OCI-LY7 (cell line): ENCODE measurements at regions of chr6 and their contacts with region 1.

Region 1: GRCh38 chr6:26025894-26026832 is 61.1 kb upstream of the HFE start:
- DNase-seq: peak; percentile 95
- H3K4me3 ChIP-seq: peak overlapping the region; percentile 71
- H3K27ac ChIP-seq: peak overlapping the region; percentile 99
- H3K4me1 ChIP-seq: peaks cover 80% of the 10 kb centered on the region
- CTCF ChIP-seq: peak; percentile 88

Region 2: GRCh38 chr6:25369433-25370181 is 656.6 kb before region 1 on chr6:
- CTCF ChIA-PET with region 1: no interaction called
- POLR2A ChIA-PET with region 1: interaction called, 12 read pairs
- intact Hi-C with region 1: no loop called
- DNase-seq: peak; percentile 59
- H3K4me3 ChIP-seq: peak overlapping the region; percentile 65
- H3K27ac ChIP-seq: peak overlapping the region; percentile 87
- H3K4me1 ChIP-seq: peaks cover 90% of the 10 kb centered on the region
- CTCF ChIP-seq: 0 out of 2 replicates have a peak, but pooled peaks have one; percentile 16

Region 3: DNA sequence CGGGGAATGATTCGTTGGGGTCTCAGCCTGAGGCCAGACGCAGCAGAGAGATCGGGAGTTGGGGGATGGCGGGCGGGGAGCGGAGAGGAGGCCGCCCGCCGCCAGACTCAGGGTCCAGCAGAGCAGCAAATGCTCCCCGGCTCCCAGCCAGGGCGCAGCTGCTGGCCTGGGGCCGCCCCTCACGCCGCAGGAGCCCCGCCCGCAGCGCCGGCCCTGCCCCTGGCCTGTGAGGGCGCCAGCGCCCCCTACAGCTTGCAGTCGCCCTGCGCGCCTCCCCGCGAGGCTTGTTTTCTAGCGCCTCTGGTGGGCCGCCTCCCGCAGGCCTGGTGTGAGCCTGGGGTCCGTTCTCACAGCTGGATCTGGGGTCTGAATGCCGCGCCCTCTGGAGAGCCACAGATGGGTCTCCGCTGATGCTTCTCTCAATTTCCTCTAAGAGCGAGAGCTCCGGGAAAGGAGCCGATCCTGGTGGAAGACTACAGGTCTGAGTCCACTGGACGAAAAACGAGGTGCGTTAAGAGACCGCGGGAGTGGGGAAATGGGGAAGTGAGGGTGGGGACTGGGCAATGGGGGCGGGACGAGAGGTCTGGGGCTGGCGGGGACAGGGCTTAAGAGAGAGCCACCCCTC is 33.6 kb before region 1 on chr6:
- CTCF ChIA-PET with region 1: no interaction called
- POLR2A ChIA-PET with region 1: interaction called, 50 read pairs
- intact Hi-C with region 1: no loop called
- DNase-seq: peak; percentile 95
- H3K4me3 ChIP-seq: peak overlapping the region; percentile 70
- H3K27ac ChIP-seq: peak overlapping the region; percentile 63
- H3K4me1 ChIP-seq: peaks cover 46% of the 10 kb centered on the region
- CTCF ChIP-seq: peak; percentile 97

Region 4: DNA sequence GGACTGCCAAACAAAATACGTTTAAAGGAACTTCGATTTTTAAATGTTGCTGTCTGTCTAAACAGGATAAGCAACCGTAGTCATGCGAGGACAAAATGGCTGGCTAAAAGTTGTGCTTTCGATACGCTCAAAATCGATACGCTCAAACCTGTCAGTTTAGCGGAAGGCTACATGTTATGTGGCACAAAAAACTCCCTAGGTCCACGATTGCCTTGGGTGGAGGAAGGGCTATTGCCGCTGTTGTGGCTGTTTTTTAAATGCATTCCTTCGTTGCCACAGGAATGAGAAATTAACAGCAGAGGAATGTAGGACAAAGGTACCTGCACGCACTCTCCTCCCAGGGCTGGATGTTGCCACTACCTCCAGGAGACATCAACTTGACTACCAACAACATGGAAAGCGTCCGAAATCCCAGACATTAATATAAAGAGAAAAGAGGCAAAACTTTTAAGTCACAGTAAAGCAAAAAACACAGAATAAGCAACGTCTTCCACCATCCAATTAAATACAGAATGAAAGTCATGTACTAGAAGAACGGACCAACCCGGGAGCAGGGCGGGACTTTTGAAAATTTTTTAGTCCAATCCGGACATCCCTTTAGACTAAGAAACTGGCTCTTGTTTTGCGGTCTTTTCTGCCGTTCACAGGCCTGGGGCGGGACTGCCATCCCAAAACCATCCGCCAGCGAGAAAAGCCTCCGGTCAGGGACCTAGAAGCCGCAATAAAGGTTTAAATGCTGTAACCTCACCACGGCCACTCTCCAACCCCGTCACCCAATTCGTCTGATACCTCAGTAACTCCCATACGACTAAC is 28.9 kb after region 1 on chr6:
- CTCF ChIA-PET with region 1: interaction called, 3 read pairs
- POLR2A ChIA-PET with region 1: interaction called, 793 read pairs
- intact Hi-C with region 1: loop called (anchors 1 kb)
- DNase-seq: peak; percentile 93
- H3K4me3 ChIP-seq: peak overlapping the region; percentile 70
- H3K27ac ChIP-seq: peak overlapping the region; percentile 93
- H3K4me1 ChIP-seq: peaks cover 41% of the 10 kb centered on the region
- CTCF ChIP-seq: no peak

Region 5: DNA sequence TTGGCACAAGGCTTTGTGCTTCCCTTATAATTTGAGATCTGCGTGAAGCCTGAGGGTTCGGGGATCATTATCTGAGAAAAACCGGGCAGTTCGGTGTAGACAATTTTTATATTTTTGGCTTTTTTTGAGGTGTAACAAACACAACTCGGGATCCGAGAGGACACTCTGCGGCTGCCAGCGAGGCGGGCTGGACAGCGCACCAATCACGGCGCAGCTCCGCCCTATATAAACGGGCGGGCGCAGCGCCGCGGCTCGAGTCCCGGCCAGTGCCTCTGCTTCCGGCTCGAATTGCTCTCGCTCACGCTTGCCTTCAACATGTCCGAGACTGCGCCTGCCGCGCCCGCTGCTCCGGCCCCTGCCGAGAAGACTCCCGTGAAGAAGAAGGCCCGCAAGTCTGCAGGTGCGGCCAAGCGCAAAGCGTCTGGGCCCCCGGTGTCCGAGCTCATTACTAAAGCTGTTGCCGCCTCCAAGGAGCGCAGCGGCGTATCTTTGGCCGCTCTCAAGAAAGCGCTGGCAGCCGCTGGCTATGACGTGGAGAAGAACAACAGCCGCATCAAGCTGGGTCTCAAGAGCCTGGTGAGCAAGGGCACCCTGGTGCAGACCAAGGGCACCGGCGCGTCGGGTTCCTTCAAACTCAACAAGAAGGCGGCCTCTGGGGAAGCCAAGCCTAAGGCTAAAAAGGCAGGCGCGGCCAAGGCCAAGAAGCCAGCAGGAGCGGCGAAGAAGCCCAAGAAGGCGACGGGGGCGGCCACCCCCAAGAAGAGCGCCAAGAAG is 130.1 kb after region 1 on chr6:
- CTCF ChIA-PET with region 1: no interaction called
- POLR2A ChIA-PET with region 1: interaction called, 89 read pairs
- intact Hi-C with region 1: loop called (anchors 1 kb)
- DNase-seq: peak; percentile 88
- H3K4me3 ChIP-seq: peak overlapping the region; percentile 79
- H3K27ac ChIP-seq: peak overlapping the region; percentile 99
- H3K4me1 ChIP-seq: peaks cover 28% of the 10 kb centered on the region
- CTCF ChIP-seq: no peak

Region 6: DNA sequence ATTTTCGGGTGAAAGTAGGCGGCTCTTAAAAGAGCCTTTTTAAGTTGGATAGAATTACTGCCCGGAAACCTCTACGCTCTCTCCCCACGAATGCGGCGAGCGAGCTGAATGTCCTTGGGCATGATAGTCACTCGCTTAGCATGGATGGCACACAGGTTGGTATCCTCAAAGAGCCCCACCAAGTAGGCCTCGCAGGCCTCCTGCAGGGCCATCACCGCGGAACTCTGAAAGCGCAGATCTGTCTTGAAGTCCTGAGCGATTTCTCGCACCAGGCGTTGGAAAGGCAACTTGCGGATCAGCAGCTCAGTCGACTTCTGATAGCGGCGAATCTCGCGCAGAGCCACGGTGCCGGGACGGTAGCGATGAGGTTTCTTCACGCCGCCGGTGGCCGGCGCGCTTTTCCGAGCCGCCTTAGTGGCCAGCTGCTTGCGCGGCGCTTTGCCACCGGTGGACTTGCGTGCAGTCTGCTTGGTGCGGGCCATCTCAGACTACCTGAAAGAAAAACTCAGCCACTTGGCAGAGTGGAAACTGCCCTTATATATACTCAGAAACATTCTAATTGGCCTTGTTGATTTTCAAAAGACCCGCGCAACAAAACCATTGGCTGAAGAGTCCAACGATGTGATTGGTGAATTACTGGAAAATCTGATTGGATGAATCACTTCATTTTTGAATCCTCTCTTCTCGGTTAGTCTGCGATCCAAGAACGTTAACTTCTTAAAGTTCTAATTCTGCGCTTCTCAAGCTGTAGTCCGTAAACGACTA is 244.9 kb after region 1 on chr6:
- CTCF ChIA-PET with region 1: no interaction called
- POLR2A ChIA-PET with region 1: interaction called, 35 read pairs
- intact Hi-C with region 1: no loop called
- DNase-seq: peak; percentile 98
- H3K4me3 ChIP-seq: peak overlapping the region; percentile 87
- H3K27ac ChIP-seq: peak overlapping the region; percentile 99
- H3K4me1 ChIP-seq: peaks cover 42% of the 10 kb centered on the region
- CTCF ChIP-seq: no peak; the same call in 1 of the 2 replicates

Region 7: GRCh38 chr6:27825025-27825793 is 1799.0 kb after region 1 on chr6:
- CTCF ChIA-PET with region 1: no interaction called
- POLR2A ChIA-PET with region 1: interaction called, 12 read pairs
- intact Hi-C with region 1: no loop called
- DNase-seq: peak; percentile 72
- H3K4me3 ChIP-seq: peak overlapping the region; percentile 71
- H3K27ac ChIP-seq: peak overlapping the region; percentile 93
- H3K4me1 ChIP-seq: peaks cover 46% of the 10 kb centered on the region
- CTCF ChIP-seq: no peak